Vagina (tissue), 2 donors: ENCODE measurements at regions of chr14 and their contacts with region 1.

Region 1: GRCh38 chr14:80554139-80554538 is 342.8 kb upstream of the DIO2 start:
- DNase-seq: no peak
- H3K4me3 ChIP-seq: no peak overlapping the region
- H3K27ac ChIP-seq: no peak overlapping the region
- H3K4me1 ChIP-seq: peaks cover 5% of the 10 kb centered on the region
- H3K27me3 ChIP-seq: no peaks in the 10 kb centered on the region
- CTCF ChIP-seq: no peak
- POLR2A ChIP-seq: no peak

Region 2: GRCh38 chr14:82180139-82180538 is 1626.0 kb after region 1 on chr14:
- intact Hi-C with region 1: loop called (anchors 5 kb)
- DNase-seq: no peak
- H3K4me3 ChIP-seq: no peak overlapping the region
- H3K27ac ChIP-seq: no peak overlapping the region
- H3K4me1 ChIP-seq: no peaks in the 10 kb centered on the region
- H3K27me3 ChIP-seq: no peaks in the 10 kb centered on the region
- CTCF ChIP-seq: no peak
- POLR2A ChIP-seq: no peak